Uterus (tissue), 4 donors: ENCODE measurements at regions of chr12 and their contacts with region 1.

Region 1: DNA sequence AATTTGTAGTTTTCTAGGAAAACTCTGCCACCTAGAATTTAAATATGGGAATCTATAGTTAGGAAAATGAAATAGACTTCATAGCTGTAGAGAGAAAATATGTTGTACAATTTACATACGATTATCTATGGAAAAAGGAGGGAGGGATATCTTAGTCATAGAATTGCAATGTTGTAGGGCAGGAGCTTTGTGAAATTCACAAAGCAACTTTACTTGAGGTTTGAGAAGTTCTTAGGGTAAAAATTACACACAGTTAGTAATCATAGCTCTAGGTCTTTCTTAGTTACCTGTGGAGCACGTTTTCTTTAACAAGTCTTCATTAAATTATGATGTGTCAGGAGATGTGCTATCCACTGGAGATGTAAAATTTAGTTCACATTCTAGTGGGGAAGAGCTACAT is 61.4 kb upstream of the DBX2 start:
- DNase-seq: no peak
- H3K4me3 ChIP-seq: no peak overlapping the region
- H3K27ac ChIP-seq: no peak overlapping the region
- H3K4me1 ChIP-seq: no peaks in the 10 kb centered on the region
- H3K27me3 ChIP-seq: no peaks in the 10 kb centered on the region
- CTCF ChIP-seq: no peak
- POLR2A ChIP-seq: no peak

Region 2: GRCh38 chr12:44490181-44490580 is 622.1 kb before region 1 on chr12:
- intact Hi-C with region 1: loop called (anchors 5 kb)
- DNase-seq: no peak
- H3K4me3 ChIP-seq: no peak overlapping the region
- H3K27ac ChIP-seq: no peak overlapping the region
- H3K4me1 ChIP-seq: no peaks in the 10 kb centered on the region
- H3K27me3 ChIP-seq: no peaks in the 10 kb centered on the region
- CTCF ChIP-seq: no peak
- POLR2A ChIP-seq: no peak

Region 3: GRCh38 chr12:45183246-45183645 is 70.9 kb after region 1 on chr12:
- intact Hi-C with region 1: no loop called
- DNase-seq: no peak
- H3K4me3 ChIP-seq: no peak overlapping the region
- H3K27ac ChIP-seq: no peak overlapping the region
- H3K4me1 ChIP-seq: no peaks in the 10 kb centered on the region
- H3K27me3 ChIP-seq: no peaks in the 10 kb centered on the region
- CTCF ChIP-seq: peak; percentile 37 to 60 (median 47)
- POLR2A ChIP-seq: no peak